Activated naive CD4-positive, alpha-beta T cell treated with anti-CD3 and anti-CD28 coated beads for 36 hours (primary cell): ENCODE measurements at regions of chr1 and their contacts with region 1.

Region 1: GRCh38 chr1:33367485-33368405 is 46.8 kb upstream of the A3GALT2 start:
- DNase-seq: peak; percentile 92
- H3K4me3 Mint-ChIP-seq: no peak overlapping the region
- H3K27ac Mint-ChIP-seq: no peak overlapping the region
- H3K4me1 Mint-ChIP-seq: no peaks in the 10 kb centered on the region
- H3K27me3 Mint-ChIP-seq: no peaks in the 10 kb centered on the region

Region 2: GRCh38 chr1:33111970-33112369 is 255.8 kb before region 1 on chr1:
- CTCF ChIA-PET with region 1: no interaction called
- intact Hi-C with region 1: loop called (anchors 1 kb)
- DNase-seq: no peak
- H3K4me3 Mint-ChIP-seq: no peak overlapping the region
- H3K27ac Mint-ChIP-seq: no peak overlapping the region
- H3K4me1 Mint-ChIP-seq: no peaks in the 10 kb centered on the region
- H3K27me3 Mint-ChIP-seq: no peaks in the 10 kb centered on the region

Region 3: GRCh38 chr1:33610864-33611455 is 243.2 kb after region 1 on chr1:
- CTCF ChIA-PET with region 1: no interaction called
- intact Hi-C with region 1: loop called (anchors 5 kb)
- DNase-seq: no peak
- H3K4me3 Mint-ChIP-seq: no peak overlapping the region
- H3K27ac Mint-ChIP-seq: no peak overlapping the region
- H3K4me1 Mint-ChIP-seq: peaks cover 2% of the 10 kb centered on the region
- H3K27me3 Mint-ChIP-seq: peaks cover 9% of the 10 kb centered on the region

Region 4: DNA sequence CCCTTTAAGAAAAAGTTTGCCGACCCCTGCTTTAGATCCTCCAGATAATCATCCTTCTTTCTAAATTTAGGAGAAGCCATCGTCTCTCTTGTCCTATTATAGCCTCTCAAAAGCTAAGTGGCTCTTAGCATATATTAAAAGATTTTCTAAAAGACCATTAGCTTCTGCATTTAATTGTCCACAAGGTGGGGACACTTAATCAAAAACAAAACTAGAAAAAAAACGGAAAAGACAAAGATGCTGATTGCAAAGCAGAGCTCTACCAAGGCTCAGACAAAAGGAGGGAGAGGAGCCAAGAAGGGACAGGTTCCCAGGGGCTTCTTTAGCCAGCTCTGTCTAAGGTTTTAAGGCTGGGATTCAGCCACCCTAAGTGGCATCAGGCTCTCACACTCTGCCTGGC is 367.9 kb after region 1 on chr1:
- CTCF ChIA-PET with region 1: no interaction called
- intact Hi-C with region 1: no loop called
- DNase-seq: no peak
- H3K4me3 Mint-ChIP-seq: no peak overlapping the region
- H3K27ac Mint-ChIP-seq: no peak overlapping the region
- H3K4me1 Mint-ChIP-seq: no peaks in the 10 kb centered on the region
- H3K27me3 Mint-ChIP-seq: peaks cover 15% of the 10 kb centered on the region